ENCODE measurements at regions of chr11 and their contacts with region 1.

Region 1: DNA sequence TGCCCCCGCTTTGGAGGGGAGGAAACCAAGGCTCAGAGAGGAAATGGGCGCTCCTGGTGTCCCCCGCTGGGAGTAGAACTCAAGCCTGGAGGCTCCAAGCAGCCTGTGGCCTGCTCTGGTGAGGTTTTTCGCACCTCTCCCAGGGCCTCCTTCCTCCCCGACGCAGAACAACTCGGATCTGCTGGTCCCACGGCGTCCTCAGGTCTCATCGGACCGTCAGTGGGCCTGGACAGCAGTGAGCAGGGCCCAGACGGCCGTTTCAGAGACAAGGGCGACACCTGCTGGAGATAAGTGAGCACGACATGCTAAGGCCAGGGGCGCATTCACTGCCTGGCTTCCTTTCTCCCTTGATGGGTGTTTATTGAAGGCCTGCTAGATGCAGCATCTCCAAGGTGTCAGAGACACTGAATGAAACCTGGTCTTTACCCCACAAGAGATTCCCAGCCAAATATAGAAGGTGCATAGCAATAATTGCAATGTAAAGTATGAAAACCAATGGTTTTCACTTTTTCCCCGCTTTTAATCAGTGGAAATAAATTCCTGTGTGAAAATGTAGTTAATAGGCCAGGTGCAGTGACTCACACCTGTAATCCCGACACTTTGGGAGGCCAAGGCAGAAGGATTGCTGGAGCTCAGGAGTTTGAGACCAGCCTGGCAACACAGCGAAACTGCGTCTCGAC is 26.9 kb upstream of the CD82 start:
- DNase-seq: peak; percentile 52 to 60
- ATAC-seq: peak; percentile 86 to 96
- H3K4me3 ChIP-seq: no peak overlapping the region
- H3K27ac ChIP-seq: no peak overlapping the region
- H3K4me1 ChIP-seq: peaks cover 0 to 4% of the 10 kb centered on the region in 2 donors
- H3K27me3 ChIP-seq: peaks cover 0 to 4% (median 0%) of the 10 kb centered on the region in 3 donors
- CTCF ChIP-seq: peak; percentile 92 to 96 (median 94)
- POLR2A ChIP-seq: no peak

Region 2: GRCh38 chr11:44095506-44096394 is 442.8 kb before region 1 on chr11 and contains the start of gene EXT2:
- in situ Hi-C with region 1: loop called (anchors 5 to 10 kb)
- intact Hi-C with region 1: loop called (anchors 1 kb)
- DNase-seq: peak; percentile 78 to 85
- ATAC-seq: peak; percentile 95
- H3K4me3 ChIP-seq: peak within 1 kb of the TSS; percentile 71 to 90 (median 86)
- H3K27ac ChIP-seq: peak within 1 kb of the TSS; percentile 76 to 91 (median 84)
- H3K4me1 ChIP-seq: peaks cover 17 to 22% of the 10 kb centered on the region in 2 donors
- H3K27me3 ChIP-seq: no peaks in the 10 kb centered on the region
- CTCF ChIP-seq: peak; percentile 83 to 92 (median 89)
- POLR2A ChIP-seq: peak; percentile 56 to 69
- total RNA-seq, gene EXT2: 20.4 to 24.8 (median 23.1) TPM

Region 3: GRCh38 chr11:44104481-44105294 is 433.8 kb before region 1 on chr11:
- in situ Hi-C with region 1: loop called in 2 of 4 experiments (anchors 10 kb)
- intact Hi-C with region 1: no loop called
- DNase-seq: no peak
- ATAC-seq: no peak
- H3K4me3 ChIP-seq: no peak overlapping the region
- H3K27ac ChIP-seq: no peak overlapping the region
- H3K4me1 ChIP-seq: peaks cover 4 to 14% of the 10 kb centered on the region in 2 donors
- H3K27me3 ChIP-seq: no peaks in the 10 kb centered on the region
- CTCF ChIP-seq: no peak
- POLR2A ChIP-seq: no peak

Region 4: GRCh38 chr11:44133335-44133946 is 405.1 kb before region 1 on chr11:
- in situ Hi-C with region 1: no loop called
- intact Hi-C with region 1: loop called (anchors 2 kb)
- DNase-seq: no peak
- ATAC-seq: peak in 1 of 2 donors; percentile 61
- H3K4me3 ChIP-seq: no peak overlapping the region
- H3K27ac ChIP-seq: no peak overlapping the region
- H3K4me1 ChIP-seq: peaks cover 6 to 18% of the 10 kb centered on the region in 2 donors
- H3K27me3 ChIP-seq: no peaks in the 10 kb centered on the region
- CTCF ChIP-seq: peak; percentile 36 to 66 (median 51)
- POLR2A ChIP-seq: no peak

Region 5: GRCh38 chr11:44286268-44286880 is 252.1 kb before region 1 on chr11:
- in situ Hi-C with region 1: loop called (anchors 5 to 10 kb)
- intact Hi-C with region 1: loop called (anchors 1 kb)
- DNase-seq: no peak
- ATAC-seq: peak; percentile 56 to 62
- H3K4me3 ChIP-seq: no peak overlapping the region
- H3K27ac ChIP-seq: no peak overlapping the region
- H3K4me1 ChIP-seq: no peaks in the 10 kb centered on the region
- H3K27me3 ChIP-seq: peaks cover 0 to 3% (median 0%) of the 10 kb centered on the region in 3 donors
- CTCF ChIP-seq: peak; percentile 70 to 87 (median 82)
- POLR2A ChIP-seq: no peak